Naive thymus-derived CD8-positive, alpha-beta T cell (primary cell): ENCODE measurements at regions of chr12 and their contacts with region 1.

Region 1: GRCh38 chr12:31989571-31990362 is 30.6 kb downstream of the RESF1 start:
- DNase-seq: no peak
- ATAC-seq: no peak
- H3K4me3 Mint-ChIP-seq: peak overlapping the region in 2 of 10 donors; percentile 5 to 55
- H3K27ac Mint-ChIP-seq: peak overlapping the region in 7 of 10 donors; percentile 23 to 80 (median 66)
- H3K4me1 Mint-ChIP-seq: peaks cover 9 to 38% (median 28%) of the 10 kb centered on the region in 4 donors
- H3K27me3 Mint-ChIP-seq: no peaks in the 10 kb centered on the region

Region 2: DNA sequence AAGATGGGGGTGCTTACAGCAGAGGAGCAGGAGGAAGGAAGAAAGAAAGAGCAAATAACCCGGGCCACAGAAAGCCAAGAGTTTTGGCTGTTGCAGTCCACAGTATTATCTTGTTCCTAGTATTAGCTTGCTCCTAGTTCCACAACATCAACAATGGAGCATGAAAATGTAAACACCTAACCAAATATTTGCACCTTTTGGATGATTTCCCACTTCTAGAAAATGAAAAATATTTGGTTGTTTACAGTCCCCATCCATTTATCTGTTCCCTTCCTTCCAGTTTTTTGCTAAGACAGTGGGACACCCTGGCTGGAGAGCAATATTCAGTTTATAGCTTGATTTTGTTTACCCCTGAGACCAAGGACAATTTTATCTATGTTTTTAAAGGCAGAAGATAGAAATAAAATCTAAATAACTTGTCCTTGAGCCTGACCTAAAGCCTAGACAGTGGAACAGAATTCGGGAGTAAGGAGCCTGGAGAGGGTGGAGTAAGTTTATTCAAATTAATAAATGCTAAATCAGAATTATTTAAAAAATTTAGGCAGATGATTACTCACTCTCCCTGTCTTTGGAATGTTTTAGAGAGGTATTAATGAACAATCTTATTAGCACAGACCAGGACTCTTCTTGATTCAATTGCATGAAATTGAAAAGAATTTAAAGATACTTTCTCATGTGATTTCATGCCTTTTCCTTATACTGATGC is 21.0 kb after region 1 on chr12:
- POLR2A ChIA-PET with region 1: interaction called, 11 read pairs
- DNase-seq: no peak
- ATAC-seq: no peak
- H3K4me3 Mint-ChIP-seq: no peak overlapping the region
- H3K27ac Mint-ChIP-seq: peak overlapping the region in 1 of 10 donors; percentile 74
- H3K4me1 Mint-ChIP-seq: peaks cover 4 to 18% (median 9%) of the 10 kb centered on the region in 4 donors
- H3K27me3 Mint-ChIP-seq: no peaks in the 10 kb centered on the region

Region 3: GRCh38 chr12:32069071-32069470 is 79.3 kb after region 1 on chr12:
- POLR2A ChIA-PET with region 1: no interaction called
- DNase-seq: no peak
- ATAC-seq: no peak
- H3K4me3 Mint-ChIP-seq: no peak overlapping the region
- H3K27ac Mint-ChIP-seq: peak overlapping the region in 1 of 10 donors; percentile 44
- H3K4me1 Mint-ChIP-seq: peaks cover 0 to 3% (median 0%) of the 10 kb centered on the region in 4 donors
- H3K27me3 Mint-ChIP-seq: no peaks in the 10 kb centered on the region

Region 4: GRCh38 chr12:32134189-32134888 is 144.6 kb after region 1 on chr12:
- POLR2A ChIA-PET with region 1: no interaction called
- DNase-seq: peak in 5 of 10 donors; percentile 5 to 31 (median 14)
- ATAC-seq: peak; percentile 57 to 67
- H3K4me3 Mint-ChIP-seq: peak overlapping the region in 2 of 10 donors; percentile 17 to 56
- H3K27ac Mint-ChIP-seq: peak overlapping the region in 9 of 10 donors; percentile 3 to 82 (median 28)
- H3K4me1 Mint-ChIP-seq: peaks cover 13 to 23% (median 18%) of the 10 kb centered on the region in 4 donors
- H3K27me3 Mint-ChIP-seq: no peaks in the 10 kb centered on the region